ENCODE measurements at regions of chr5 and their contacts with region 1.

Region 1: GRCh38 chr5:151164686-151165392 is 7.3 kb upstream of the ANXA6 start:
- DNase-seq: peak; percentile 90
- H3K4me3 Mint-ChIP-seq: no peak overlapping the region
- H3K27ac Mint-ChIP-seq: no peak overlapping the region
- H3K4me1 Mint-ChIP-seq: peaks cover 18% of the 10 kb centered on the region
- H3K27me3 Mint-ChIP-seq: no peaks in the 10 kb centered on the region

Region 2: GRCh38 chr5:150398722-150399523 is 765.9 kb before region 1 on chr5:
- CTCF ChIA-PET with region 1: no interaction called
- POLR2A ChIA-PET with region 1: no interaction called
- intact Hi-C with region 1: no loop called
- DNase-seq: no peak
- H3K4me3 Mint-ChIP-seq: no peak overlapping the region
- H3K27ac Mint-ChIP-seq: no peak overlapping the region
- H3K4me1 Mint-ChIP-seq: no peaks in the 10 kb centered on the region
- H3K27me3 Mint-ChIP-seq: no peaks in the 10 kb centered on the region

Region 3: GRCh38 chr5:150801117-150801927 is 363.5 kb before region 1 on chr5:
- CTCF ChIA-PET with region 1: interaction called, 12 read pairs
- POLR2A ChIA-PET with region 1: no interaction called
- intact Hi-C with region 1: loop called (anchors 2 kb)
- DNase-seq: peak; percentile 16
- H3K4me3 Mint-ChIP-seq: no peak overlapping the region
- H3K27ac Mint-ChIP-seq: no peak overlapping the region
- H3K4me1 Mint-ChIP-seq: peaks cover 13% of the 10 kb centered on the region
- H3K27me3 Mint-ChIP-seq: peaks cover 8% of the 10 kb centered on the region

Region 4: GRCh38 chr5:151002250-151002649 is 162.6 kb before region 1 on chr5:
- CTCF ChIA-PET with region 1: interaction called, 5 read pairs
- POLR2A ChIA-PET with region 1: no interaction called
- intact Hi-C with region 1: loop called (anchors 2 kb)
- DNase-seq: no peak
- H3K4me3 Mint-ChIP-seq: no peak overlapping the region
- H3K27ac Mint-ChIP-seq: no peak overlapping the region
- H3K4me1 Mint-ChIP-seq: no peaks in the 10 kb centered on the region
- H3K27me3 Mint-ChIP-seq: no peaks in the 10 kb centered on the region

Region 5: DNA sequence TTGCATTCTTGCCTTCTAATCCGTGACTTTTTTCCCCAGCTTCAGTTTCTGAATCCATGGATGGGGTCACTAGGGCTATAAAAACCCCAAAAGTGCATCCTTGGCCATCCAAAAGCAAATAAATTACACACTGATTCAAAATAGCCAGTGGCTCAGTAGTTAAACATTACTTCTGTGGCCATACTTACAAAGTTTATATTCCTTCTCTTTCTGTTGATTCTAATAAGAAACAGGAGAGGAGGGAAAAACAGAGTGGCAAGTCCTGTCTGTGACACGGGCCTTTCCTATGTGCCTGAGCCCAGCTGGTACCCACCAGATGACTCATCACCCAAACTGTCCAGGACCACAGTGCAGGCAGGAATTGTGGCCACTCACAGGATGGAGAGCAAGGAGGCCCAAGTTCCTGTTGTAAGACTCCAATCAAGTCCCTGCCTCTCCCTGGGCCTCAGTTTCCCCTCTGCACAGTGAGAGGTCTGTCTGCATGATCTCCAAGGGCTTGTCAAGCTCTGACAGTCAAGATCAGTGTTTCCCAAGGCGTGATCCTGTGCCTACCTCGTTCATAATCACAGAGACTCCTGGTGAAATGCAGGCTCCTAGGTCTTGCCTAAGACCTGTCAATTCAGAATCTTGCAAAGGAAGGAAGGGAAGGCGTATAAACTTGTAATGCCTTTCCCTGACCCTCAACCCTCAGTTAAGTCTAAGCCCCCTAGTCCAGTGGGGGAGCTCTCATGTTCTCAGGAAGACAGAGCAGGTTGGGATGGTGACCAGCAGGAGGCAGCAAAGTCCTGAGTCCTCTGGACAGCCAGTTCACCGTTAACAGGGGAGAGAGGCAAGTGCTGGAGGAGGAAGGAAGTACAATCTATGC is 113.5 kb before region 1 on chr5:
- CTCF ChIA-PET with region 1: interaction called, 92 read pairs
- POLR2A ChIA-PET with region 1: no interaction called
- intact Hi-C with region 1: no loop called
- DNase-seq: peak; percentile 79
- H3K4me3 Mint-ChIP-seq: no peak overlapping the region
- H3K27ac Mint-ChIP-seq: peak overlapping the region; percentile 67
- H3K4me1 Mint-ChIP-seq: peaks cover 15% of the 10 kb centered on the region
- H3K27me3 Mint-ChIP-seq: no peaks in the 10 kb centered on the region

Region 6: DNA sequence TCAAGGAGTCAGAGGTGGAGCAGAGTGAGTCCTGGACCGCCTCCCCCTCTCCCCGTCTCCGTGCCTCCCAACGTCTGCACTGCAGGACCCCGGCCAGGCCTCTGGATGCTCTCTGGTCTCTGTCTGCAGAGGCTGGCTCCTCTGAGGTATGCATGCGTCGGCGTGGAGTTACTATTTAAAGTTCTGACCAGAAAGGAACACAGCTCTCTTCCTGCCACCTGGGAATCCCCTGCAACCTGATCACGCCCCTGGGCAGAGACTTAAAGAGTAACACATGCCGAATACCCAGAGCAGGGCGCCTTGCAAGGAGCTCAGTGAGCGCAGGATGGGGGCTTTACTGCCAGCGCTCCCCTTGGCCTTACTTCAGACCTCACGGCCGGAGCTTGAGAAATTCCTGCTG is 23.3 kb before region 1 on chr5:
- CTCF ChIA-PET with region 1: interaction called, 553 read pairs
- POLR2A ChIA-PET with region 1: no interaction called
- intact Hi-C with region 1: no loop called
- DNase-seq: peak; percentile 84
- H3K4me3 Mint-ChIP-seq: peak overlapping the region; percentile 55
- H3K27ac Mint-ChIP-seq: peak overlapping the region; percentile 76
- H3K4me1 Mint-ChIP-seq: peaks cover 88% of the 10 kb centered on the region
- H3K27me3 Mint-ChIP-seq: no peaks in the 10 kb centered on the region

Region 7: GRCh38 chr5:151191659-151192058 is 26.8 kb after region 1 on chr5:
- CTCF ChIA-PET with region 1: interaction called, 12 read pairs
- POLR2A ChIA-PET with region 1: no interaction called
- intact Hi-C with region 1: no loop called
- DNase-seq: no peak
- H3K4me3 Mint-ChIP-seq: no peak overlapping the region
- H3K27ac Mint-ChIP-seq: no peak overlapping the region
- H3K4me1 Mint-ChIP-seq: peaks cover 46% of the 10 kb centered on the region
- H3K27me3 Mint-ChIP-seq: no peaks in the 10 kb centered on the region

Region 8: GRCh38 chr5:151315998-151316597 is 151.3 kb after region 1 on chr5:
- CTCF ChIA-PET with region 1: interaction called, 15 read pairs
- POLR2A ChIA-PET with region 1: no interaction called
- intact Hi-C with region 1: no loop called
- DNase-seq: peak; percentile 76
- H3K4me3 Mint-ChIP-seq: no peak overlapping the region
- H3K27ac Mint-ChIP-seq: no peak overlapping the region
- H3K4me1 Mint-ChIP-seq: no peaks in the 10 kb centered on the region
- H3K27me3 Mint-ChIP-seq: peaks cover 2% of the 10 kb centered on the region

Measured in activated CD4-positive, alpha-beta memory T cell treated with anti-CD3 and anti-CD28 coated beads for 36 hours (primary cell).